Dendritic cell treated with granulocyte-macrophage colony-stimulating factor and Interleukin-4, amounts not matched to agents 40 ng/mL and 50 ng/mL, for 4 days (primary cell): ENCODE measurements at regions of chr1 and their contacts with region 1.

Region 1: DNA sequence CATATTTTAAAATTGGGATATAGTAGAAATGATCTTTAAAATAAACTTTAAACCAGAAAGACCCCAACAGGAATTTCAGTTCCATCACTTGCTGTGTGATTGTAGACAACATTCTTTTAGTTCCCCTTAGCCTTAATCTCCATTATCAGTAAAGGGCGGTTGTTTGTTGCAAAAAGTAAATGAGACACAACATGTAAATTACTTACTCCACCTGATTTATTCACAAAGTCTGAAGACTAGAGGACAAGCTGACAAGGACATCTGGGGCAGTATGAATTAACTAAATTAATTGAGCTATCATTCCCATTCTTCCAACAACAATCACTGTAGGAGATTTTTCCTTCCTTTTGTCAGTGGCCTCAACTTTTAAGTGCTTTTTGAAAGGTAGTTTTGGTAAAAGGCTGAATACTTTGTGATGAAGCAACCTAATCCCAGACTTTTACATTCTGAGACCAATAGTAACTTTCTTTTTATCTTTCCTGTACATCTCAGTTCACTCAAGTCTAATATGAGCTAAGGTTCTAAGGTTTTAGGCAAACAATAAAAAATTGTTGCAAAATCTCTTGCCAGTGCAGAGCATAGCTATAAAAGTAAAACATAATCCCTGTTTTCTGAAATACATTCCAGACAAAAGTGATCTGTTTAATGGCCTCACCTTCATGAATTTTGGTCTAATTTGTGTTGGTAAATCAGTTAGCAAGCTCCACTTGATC is 6.2 kb downstream of the SLC19A2 start:
- H3K4me3 Mint-ChIP-seq: no peak overlapping the region
- H3K27ac Mint-ChIP-seq: no peak overlapping the region
- H3K4me1 Mint-ChIP-seq: peaks cover 46% of the 10 kb centered on the region
- H3K27me3 Mint-ChIP-seq: no peaks in the 10 kb centered on the region

Region 2: GRCh38 chr1:169381162-169381561 is 98.4 kb before region 1 on chr1:
- intact Hi-C with region 1: no loop called
- H3K4me3 Mint-ChIP-seq: no peak overlapping the region
- H3K27ac Mint-ChIP-seq: no peak overlapping the region
- H3K4me1 Mint-ChIP-seq: peaks cover 11% of the 10 kb centered on the region
- H3K27me3 Mint-ChIP-seq: no peaks in the 10 kb centered on the region

Region 3: DNA sequence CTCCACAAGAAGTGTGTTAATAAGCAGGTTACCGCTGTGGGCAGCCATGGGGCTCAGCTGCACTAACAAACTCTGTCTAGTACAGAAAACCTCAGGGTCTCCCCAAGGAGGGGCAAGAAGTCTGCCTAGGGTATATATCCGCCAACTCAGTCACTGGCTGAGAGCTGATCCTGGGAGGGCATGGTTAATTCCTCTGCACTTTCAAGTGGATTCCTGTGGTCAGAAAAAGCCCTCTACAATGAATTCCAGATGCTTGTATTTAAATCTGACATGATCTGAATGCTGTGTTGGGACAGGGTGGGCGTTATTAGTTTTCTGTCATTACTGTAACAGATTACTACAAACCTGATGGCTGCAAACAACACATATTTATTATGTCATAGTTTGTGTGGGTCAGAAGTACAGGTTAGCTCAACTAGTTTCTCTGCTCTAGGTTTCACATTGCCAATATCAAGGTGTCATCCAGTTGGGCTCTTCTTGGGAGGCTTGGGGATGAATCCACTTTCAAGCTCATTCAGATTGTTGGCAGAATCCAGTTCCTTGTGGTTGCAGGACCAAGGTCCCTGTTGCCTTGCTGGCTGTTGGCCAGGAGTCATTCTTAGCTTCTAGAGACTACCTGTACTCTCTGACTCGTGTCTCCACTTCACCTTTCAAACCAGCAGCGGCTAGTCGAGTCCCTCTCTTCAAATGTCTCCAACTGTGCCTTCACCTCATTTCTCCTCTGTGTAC is 262.3 kb after region 1 on chr1:
- intact Hi-C with region 1: no loop called
- H3K4me3 Mint-ChIP-seq: no peak overlapping the region
- H3K27ac Mint-ChIP-seq: no peak overlapping the region
- H3K4me1 Mint-ChIP-seq: no peaks in the 10 kb centered on the region
- H3K27me3 Mint-ChIP-seq: no peaks in the 10 kb centered on the region

Region 4: DNA sequence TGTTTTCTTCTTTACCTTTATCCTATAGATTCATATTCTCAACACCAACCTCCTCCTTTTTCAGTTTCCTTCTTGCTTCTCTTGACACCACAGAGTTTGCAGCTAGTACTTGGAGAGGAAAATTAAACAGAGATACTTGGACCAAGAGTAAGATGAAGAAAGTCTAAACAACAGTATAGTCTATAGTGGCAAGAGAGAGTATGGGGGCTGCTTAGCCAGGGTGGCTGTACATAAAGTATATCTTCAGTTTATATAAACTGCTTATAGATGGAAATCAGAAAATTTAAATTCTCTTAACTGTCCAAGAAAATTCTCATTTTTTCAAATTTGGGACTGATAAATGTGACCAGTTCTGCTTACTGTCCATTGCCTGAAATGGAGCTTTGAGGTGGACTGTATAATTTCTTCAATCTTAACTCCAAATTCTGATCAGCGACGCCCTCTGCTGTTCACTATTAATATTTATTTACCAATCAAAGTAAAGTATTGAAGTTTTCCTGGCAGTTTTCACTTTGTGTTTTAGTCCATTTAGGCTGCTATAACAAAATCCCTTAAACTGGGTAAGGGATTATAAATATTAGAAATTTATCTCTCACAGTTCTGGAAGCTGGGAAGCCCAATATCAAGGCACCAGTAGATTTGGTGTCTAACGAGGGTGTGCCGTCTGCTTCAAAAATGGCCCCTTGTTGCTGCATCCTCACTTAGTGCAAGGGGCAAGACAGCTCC is 330.0 kb after region 1 on chr1:
- intact Hi-C with region 1: loop called (anchors 2 kb)
- H3K4me3 Mint-ChIP-seq: no peak overlapping the region
- H3K27ac Mint-ChIP-seq: no peak overlapping the region
- H3K4me1 Mint-ChIP-seq: no peaks in the 10 kb centered on the region
- H3K27me3 Mint-ChIP-seq: no peaks in the 10 kb centered on the region